HEK293T (cell line): ENCODE measurements at regions of chr3 and their contacts with region 1.

Region 1: GRCh38 chr3:141452036-141452435 is 34.8 kb upstream of the RASA2 start:
- DNase-seq: no peak

Region 2: GRCh38 chr3:141311496-141312353 is 140.3 kb before region 1 on chr3:
- CTCF ChIA-PET with region 1: interaction called, 11 read pairs
- POLR2A ChIA-PET with region 1: interaction called, 25 read pairs
- DNase-seq: peak; percentile 96

Region 3: GRCh38 chr3:141360888-141361598 is 91.0 kb before region 1 on chr3:
- CTCF ChIA-PET with region 1: interaction called, 19 read pairs
- POLR2A ChIA-PET with region 1: interaction called, 3 read pairs
- DNase-seq: peak; percentile 69

Region 4: GRCh38 chr3:141466633-141467169 is 14.7 kb after region 1 on chr3:
- CTCF ChIA-PET with region 1: no interaction called
- POLR2A ChIA-PET with region 1: no interaction called
- DNase-seq: no peak